ENCODE measurements at regions of chr13 and their contacts with region 1.

Region 1: DNA sequence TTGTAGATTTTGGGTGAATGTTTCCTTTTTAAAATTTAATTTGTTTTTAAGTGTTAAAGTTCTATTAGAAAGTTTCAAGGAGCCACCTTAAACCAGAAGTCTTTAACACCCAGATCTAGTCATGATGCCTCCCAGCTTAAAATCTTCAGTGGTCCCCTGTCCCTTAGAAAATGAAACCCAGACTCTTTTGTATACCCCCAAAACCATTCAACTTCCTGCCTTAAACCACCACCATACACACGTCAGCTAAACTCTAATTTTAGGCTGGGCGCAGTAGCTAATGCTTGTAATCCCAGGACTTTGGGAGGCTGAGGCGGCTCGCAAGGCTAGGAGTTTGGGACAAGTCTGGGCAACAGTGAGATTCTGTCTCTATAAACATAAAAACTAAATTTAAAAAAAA is 37.9 kb downstream of the N4BP2L1 start:
- DNase-seq: no peak
- ATAC-seq: peak; percentile 47
- H3K4me3 ChIP-seq: no peak overlapping the region
- H3K4me3 Mint-ChIP-seq: no peak overlapping the region
- H3K27ac ChIP-seq: no peak overlapping the region
- H3K27ac Mint-ChIP-seq: no peak overlapping the region
- H3K4me1 ChIP-seq: peaks cover 0 to 15% of the 10 kb centered on the region in 2 donors
- H3K4me1 Mint-ChIP-seq: peaks cover 4 to 9% (median 8%) of the 10 kb centered on the region in 7 donors
- H3K27me3 ChIP-seq: no peaks in the 10 kb centered on the region
- H3K27me3 Mint-ChIP-seq: no peaks in the 10 kb centered on the region

Region 2: DNA sequence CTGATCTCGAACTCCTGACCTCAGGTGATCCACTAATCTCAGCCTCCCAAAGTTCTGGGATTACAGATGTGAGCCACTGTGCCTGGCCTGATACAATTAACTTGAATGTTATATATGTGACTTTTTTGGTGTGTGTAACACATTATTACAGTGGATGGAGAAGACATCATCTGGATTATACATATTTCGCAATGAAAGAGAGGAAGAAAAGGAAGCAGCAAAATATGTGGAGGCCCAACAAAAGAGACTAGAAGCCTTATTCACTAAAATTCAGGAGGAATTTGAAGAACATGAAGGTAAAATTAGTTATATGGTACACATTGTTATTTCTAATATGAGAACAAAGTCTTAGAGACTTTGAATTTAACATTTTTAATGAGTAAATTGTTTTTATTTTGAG is 19.2 kb before region 1 on chr13:
- CTCF ChIA-PET with region 1: no interaction called
- POLR2A ChIA-PET with region 1: no interaction called
- intact Hi-C with region 1: no loop called
- DNase-seq: no peak
- ATAC-seq: no peak
- H3K4me3 ChIP-seq: no peak overlapping the region
- H3K4me3 Mint-ChIP-seq: no peak overlapping the region
- H3K27ac ChIP-seq: no peak overlapping the region
- H3K27ac Mint-ChIP-seq: no peak overlapping the region
- H3K4me1 ChIP-seq: no peaks in the 10 kb centered on the region
- H3K4me1 Mint-ChIP-seq: no peaks in the 10 kb centered on the region
- H3K27me3 ChIP-seq: no peaks in the 10 kb centered on the region
- H3K27me3 Mint-ChIP-seq: no peaks in the 10 kb centered on the region

Region 3: DNA sequence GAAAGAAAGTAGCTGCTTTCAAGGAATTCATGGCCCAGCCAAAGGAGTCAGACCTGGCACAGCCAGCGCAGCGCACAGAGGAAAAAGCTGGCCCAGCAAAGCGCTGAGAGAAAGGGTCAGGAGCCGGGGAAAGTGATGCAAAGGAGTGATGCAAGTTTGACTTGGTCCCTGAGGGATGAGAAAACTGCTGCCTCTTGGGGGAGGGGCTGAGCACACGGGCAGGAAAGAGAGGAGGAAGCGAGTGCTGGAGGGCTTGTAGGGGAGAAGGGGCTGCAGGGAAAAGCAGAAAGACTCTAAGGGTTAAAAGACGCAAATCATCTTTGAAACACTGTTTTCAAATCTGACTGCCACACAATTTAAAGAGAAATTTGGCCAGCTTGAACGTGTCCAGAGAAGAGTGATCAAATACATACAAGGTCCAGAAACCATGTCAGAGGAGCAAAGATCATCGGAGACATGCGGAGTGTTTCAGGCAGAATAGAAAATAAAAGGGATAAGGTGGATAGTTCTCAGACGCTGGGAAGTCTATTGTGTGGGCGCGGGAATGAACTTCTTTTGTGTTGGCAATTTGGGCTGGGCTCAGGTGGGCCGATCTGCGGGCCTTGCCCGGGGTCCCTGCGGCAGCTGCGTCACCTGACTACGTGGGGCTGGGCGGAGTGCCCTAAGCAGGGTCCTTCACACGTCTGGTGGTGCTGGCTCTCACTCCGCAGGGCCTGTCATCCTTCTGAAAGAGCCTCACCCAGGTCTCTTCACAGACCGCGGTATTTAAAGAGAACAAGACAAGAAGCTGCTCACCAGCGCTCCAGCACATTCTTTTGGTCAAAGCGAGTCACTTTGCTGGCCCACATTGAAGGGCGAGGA is 19.7 kb after region 1 on chr13:
- CTCF ChIA-PET with region 1: interaction called, 5 read pairs
- POLR2A ChIA-PET with region 1: no interaction called
- intact Hi-C with region 1: loop called in 1 of 2 experiments (anchors 2 kb)
- DNase-seq: no peak
- ATAC-seq: no peak
- H3K4me3 ChIP-seq: no peak overlapping the region
- H3K4me3 Mint-ChIP-seq: no peak overlapping the region
- H3K27ac ChIP-seq: no peak overlapping the region
- H3K27ac Mint-ChIP-seq: peak overlapping the region in 3 of 9 donors; percentile 32 to 66 (median 52)
- H3K4me1 ChIP-seq: no peaks in the 10 kb centered on the region
- H3K4me1 Mint-ChIP-seq: peaks cover 18 to 43% (median 24%) of the 10 kb centered on the region in 7 donors
- H3K27me3 ChIP-seq: no peaks in the 10 kb centered on the region
- H3K27me3 Mint-ChIP-seq: no peaks in the 10 kb centered on the region